Natural killer cell (primary cell): ENCODE measurements at regions of chr6 and their contacts with region 1.

Region 1: GRCh38 chr6:158972241-158973233 is 27.5 kb downstream of the RSPH3 start:
- DNase-seq: peak in 1 of 2 donors; percentile 80
- ATAC-seq: peak; percentile 58 to 84 (median 75)
- H3K4me3 ChIP-seq: no peak overlapping the region
- H3K4me3 Mint-ChIP-seq: no peak overlapping the region
- H3K27ac ChIP-seq: no peak overlapping the region
- H3K27ac Mint-ChIP-seq: no peak overlapping the region
- H3K4me1 ChIP-seq: no peaks in the 10 kb centered on the region
- H3K4me1 Mint-ChIP-seq: peaks cover 0 to 4% of the 10 kb centered on the region in 2 donors
- H3K27me3 ChIP-seq: no peaks in the 10 kb centered on the region
- H3K27me3 Mint-ChIP-seq: no peaks in the 10 kb centered on the region
- CTCF ChIP-seq: peak; percentile 87

Region 2: GRCh38 chr6:158213925-158214674 is 758.4 kb before region 1 on chr6:
- intact Hi-C with region 1: loop called (anchors 10 kb)
- DNase-seq: peak in 1 of 2 donors; percentile 81
- ATAC-seq: peak; percentile 83 to 97 (median 93)
- H3K4me3 ChIP-seq: no peak overlapping the region
- H3K4me3 Mint-ChIP-seq: no peak overlapping the region
- H3K27ac ChIP-seq: no peak overlapping the region
- H3K27ac Mint-ChIP-seq: no peak overlapping the region
- H3K4me1 ChIP-seq: no peaks in the 10 kb centered on the region
- H3K4me1 Mint-ChIP-seq: peaks cover under 1 to 13% of the 10 kb centered on the region in 2 donors
- H3K27me3 ChIP-seq: no peaks in the 10 kb centered on the region
- H3K27me3 Mint-ChIP-seq: peaks cover 0 to 1% of the 10 kb centered on the region in 2 donors
- CTCF ChIP-seq: peak; percentile 76

Region 3: GRCh38 chr6:158704181-158704822 is 268.2 kb before region 1 on chr6:
- intact Hi-C with region 1: loop called (anchors 1 kb)
- DNase-seq: peak; percentile 83 to 88
- ATAC-seq: peak; percentile 92 to 97 (median 96)
- H3K4me3 ChIP-seq: peak overlapping the region; percentile 24
- H3K4me3 Mint-ChIP-seq: peak overlapping the region; percentile 90
- H3K27ac ChIP-seq: peak overlapping the region; percentile 24
- H3K27ac Mint-ChIP-seq: peak overlapping the region; percentile 29 to 94
- H3K4me1 ChIP-seq: peaks cover 39% of the 10 kb centered on the region
- H3K4me1 Mint-ChIP-seq: peaks cover 15 to 36% of the 10 kb centered on the region in 2 donors
- H3K27me3 ChIP-seq: no peaks in the 10 kb centered on the region
- H3K27me3 Mint-ChIP-seq: no peaks in the 10 kb centered on the region
- CTCF ChIP-seq: peak; percentile 98

Region 4: DNA sequence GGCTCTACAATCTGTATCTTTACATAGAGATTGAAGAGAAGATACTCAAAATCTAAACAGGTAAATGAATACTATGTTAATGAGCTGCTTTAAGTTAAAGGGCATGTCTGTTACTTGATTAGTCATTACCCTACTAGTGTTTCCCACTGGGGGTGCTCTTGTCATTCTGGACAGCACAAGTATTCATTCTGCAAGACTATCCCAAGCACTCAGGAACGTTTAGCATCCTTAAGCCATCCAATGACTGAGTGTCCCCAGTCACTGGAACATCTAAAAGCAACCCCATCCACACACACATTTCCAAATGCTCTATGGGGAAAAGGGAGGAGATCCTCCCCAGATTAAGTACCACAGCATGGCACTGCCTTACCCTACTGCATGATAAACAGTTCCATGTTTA is 179.1 kb before region 1 on chr6:
- intact Hi-C with region 1: loop called (anchors 1 kb)
- DNase-seq: peak in 1 of 2 donors; percentile 69
- ATAC-seq: peak in 2 of 3 donors; percentile 46 to 55
- H3K4me3 ChIP-seq: no peak overlapping the region
- H3K4me3 Mint-ChIP-seq: no peak overlapping the region
- H3K27ac ChIP-seq: no peak overlapping the region
- H3K27ac Mint-ChIP-seq: peak overlapping the region in 1 of 2 donors; percentile 29
- H3K4me1 ChIP-seq: peaks cover 52% of the 10 kb centered on the region
- H3K4me1 Mint-ChIP-seq: peaks cover 60 to 72% of the 10 kb centered on the region in 2 donors
- H3K27me3 ChIP-seq: no peaks in the 10 kb centered on the region
- H3K27me3 Mint-ChIP-seq: no peaks in the 10 kb centered on the region
- CTCF ChIP-seq: peak; percentile 50